ENCODE measurements at regions of chr12 and their contacts with region 1.

Region 1: DNA sequence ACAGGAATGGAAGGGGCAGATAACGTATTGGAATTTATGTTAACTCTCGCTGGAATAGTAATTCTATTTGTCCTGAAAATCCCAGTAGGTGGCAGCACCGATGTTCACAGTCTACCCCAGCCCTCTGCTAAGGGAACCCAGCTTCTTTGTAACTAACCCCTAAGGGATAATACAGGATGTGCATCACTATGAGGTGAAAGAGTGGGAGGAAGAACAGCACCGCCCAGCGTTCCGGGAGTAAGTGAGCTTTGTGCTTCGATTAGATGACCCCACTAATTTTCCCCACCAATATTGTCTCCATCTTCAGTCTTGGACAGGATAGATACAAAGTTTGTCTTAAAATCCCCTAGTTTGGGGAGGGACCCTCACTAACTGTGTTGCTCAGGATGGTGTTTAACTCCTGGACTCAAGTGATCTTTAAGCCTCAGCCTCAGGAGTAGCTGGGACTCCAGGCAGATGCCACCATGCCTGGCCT is 2.7 kb downstream of the SLC2A3 start:
- DNase-seq: peak; percentile 96
- ATAC-seq: peak; percentile 84
- H3K4me3 ChIP-seq: peak overlapping the region; percentile 97
- H3K27ac ChIP-seq: peak overlapping the region; percentile 68
- H3K4me1 ChIP-seq: peaks cover 5% of the 10 kb centered on the region
- H3K27me3 ChIP-seq: no peaks in the 10 kb centered on the region
- CTCF ChIP-seq: peak; percentile 77
- POLR2A ChIP-seq: peak; percentile 85
- RAD21 ChIP-seq: peak; percentile 83

Region 2: GRCh38 chr12:7269273-7269672 is 664.0 kb before region 1 on chr12:
- CTCF ChIA-PET with region 1: no interaction called
- POLR2A ChIA-PET with region 1: no interaction called
- dilution Hi-C with region 1: no loop called
- in situ Hi-C with region 1: no loop called
- intact Hi-C with region 1: no loop called
- DNase-seq: peak; percentile 1
- ATAC-seq: no peak
- H3K4me3 ChIP-seq: no peak overlapping the region
- H3K27ac ChIP-seq: no peak overlapping the region
- H3K4me1 ChIP-seq: no peaks in the 10 kb centered on the region
- H3K27me3 ChIP-seq: no peaks in the 10 kb centered on the region
- CTCF ChIP-seq: no peak
- POLR2A ChIP-seq: no peak
- RAD21 ChIP-seq: no peak

Region 3: GRCh38 chr12:7512553-7512952 is 420.7 kb before region 1 on chr12:
- CTCF ChIA-PET with region 1: no interaction called
- POLR2A ChIA-PET with region 1: no interaction called
- dilution Hi-C with region 1: no loop called
- in situ Hi-C with region 1: no loop called
- intact Hi-C with region 1: no loop called
- DNase-seq: peak; percentile 69
- ATAC-seq: no peak; the same call in 1 of the 2 replicates
- H3K4me3 ChIP-seq: no peak overlapping the region
- H3K27ac ChIP-seq: no peak overlapping the region
- H3K4me1 ChIP-seq: no peaks in the 10 kb centered on the region
- H3K27me3 ChIP-seq: no peaks in the 10 kb centered on the region
- CTCF ChIP-seq: no peak
- POLR2A ChIP-seq: no peak
- RAD21 ChIP-seq: no peak

Region 4: GRCh38 chr12:7899755-7900154 is 33.5 kb before region 1 on chr12:
- CTCF ChIA-PET with region 1: no interaction called
- POLR2A ChIA-PET with region 1: interaction called, 10 read pairs
- dilution Hi-C with region 1: no loop called
- in situ Hi-C with region 1: no loop called
- intact Hi-C with region 1: no loop called
- DNase-seq: peak; percentile 76
- ATAC-seq: peak; percentile 74
- H3K4me3 ChIP-seq: no peak overlapping the region
- H3K27ac ChIP-seq: no peak overlapping the region
- H3K4me1 ChIP-seq: no peaks in the 10 kb centered on the region
- H3K27me3 ChIP-seq: no peaks in the 10 kb centered on the region
- CTCF ChIP-seq: no peak
- POLR2A ChIP-seq: no peak
- RAD21 ChIP-seq: no peak

Region 5: GRCh38 chr12:7959701-7960121 is 26.4 kb after region 1 on chr12:
- CTCF ChIA-PET with region 1: interaction called, 12 read pairs
- POLR2A ChIA-PET with region 1: interaction called, 81 read pairs
- dilution Hi-C with region 1: no loop called
- in situ Hi-C with region 1: no loop called
- intact Hi-C with region 1: loop called (anchors 1 kb)
- DNase-seq: no peak
- ATAC-seq: no peak
- H3K4me3 ChIP-seq: no peak overlapping the region
- H3K27ac ChIP-seq: no peak overlapping the region; the same call in 1 of the 2 replicates
- H3K4me1 ChIP-seq: peaks cover 14% of the 10 kb centered on the region
- H3K27me3 ChIP-seq: no peaks in the 10 kb centered on the region
- CTCF ChIP-seq: no peak
- POLR2A ChIP-seq: no peak
- RAD21 ChIP-seq: no peak

Region 6: DNA sequence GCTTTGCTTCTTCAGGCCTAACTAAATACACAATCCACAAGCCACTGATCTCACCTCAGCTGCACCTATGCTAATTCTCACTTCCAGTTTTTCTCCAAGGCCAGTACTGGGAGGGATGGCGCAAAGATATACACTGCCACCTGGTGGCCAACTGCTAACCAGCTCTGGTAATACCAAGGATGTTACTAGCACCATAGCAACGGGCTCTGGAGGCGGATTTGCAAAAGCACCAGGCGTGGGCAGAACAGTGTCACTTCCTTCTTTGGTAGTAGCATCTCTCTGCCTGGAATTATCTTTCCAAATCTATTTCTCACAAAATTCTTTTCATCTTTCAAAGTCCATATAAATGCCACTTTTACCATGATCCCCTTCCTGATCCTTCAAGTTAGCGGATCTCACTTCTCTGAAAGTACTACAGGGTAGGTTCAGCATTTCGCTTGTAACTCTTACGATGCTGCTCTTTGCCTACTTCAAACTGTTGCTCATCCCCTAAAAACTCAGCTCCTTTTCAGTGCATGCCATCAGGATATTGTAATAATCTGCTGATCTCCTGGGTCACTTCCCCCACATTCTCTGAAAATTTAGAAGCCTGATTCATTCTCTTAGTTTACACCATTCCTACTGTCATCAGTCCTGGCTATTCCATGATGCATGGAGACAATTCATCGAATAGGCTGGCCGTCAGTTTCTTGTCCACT is 62.1 kb after region 1 on chr12:
- CTCF ChIA-PET with region 1: interaction called, 25 read pairs
- POLR2A ChIA-PET with region 1: interaction called, 7 read pairs
- dilution Hi-C with region 1: no loop called
- in situ Hi-C with region 1: no loop called
- intact Hi-C with region 1: loop called (anchors 1 kb)
- DNase-seq: peak; percentile 91
- ATAC-seq: peak; percentile 94
- H3K4me3 ChIP-seq: peak overlapping the region; percentile 15; the same call in 1 of the 2 replicates
- H3K27ac ChIP-seq: peak overlapping the region; percentile 62
- H3K4me1 ChIP-seq: peaks cover 8% of the 10 kb centered on the region
- H3K27me3 ChIP-seq: no peaks in the 10 kb centered on the region
- CTCF ChIP-seq: peak; percentile 82
- POLR2A ChIP-seq: no peak
- RAD21 ChIP-seq: peak; percentile 85

Region 7: GRCh38 chr12:8078398-8078797 is 145.1 kb after region 1 on chr12:
- CTCF ChIA-PET with region 1: interaction called, 3 read pairs
- POLR2A ChIA-PET with region 1: no interaction called
- dilution Hi-C with region 1: no loop called
- in situ Hi-C with region 1: no loop called
- intact Hi-C with region 1: loop called (anchors 1 kb)
- DNase-seq: peak; percentile 87
- ATAC-seq: peak; percentile 64
- H3K4me3 ChIP-seq: no peak overlapping the region
- H3K27ac ChIP-seq: no peak overlapping the region
- H3K4me1 ChIP-seq: peaks cover 4% of the 10 kb centered on the region
- H3K27me3 ChIP-seq: no peaks in the 10 kb centered on the region
- CTCF ChIP-seq: peak; percentile 77
- POLR2A ChIP-seq: no peak
- RAD21 ChIP-seq: peak; percentile 84

Region 8: DNA sequence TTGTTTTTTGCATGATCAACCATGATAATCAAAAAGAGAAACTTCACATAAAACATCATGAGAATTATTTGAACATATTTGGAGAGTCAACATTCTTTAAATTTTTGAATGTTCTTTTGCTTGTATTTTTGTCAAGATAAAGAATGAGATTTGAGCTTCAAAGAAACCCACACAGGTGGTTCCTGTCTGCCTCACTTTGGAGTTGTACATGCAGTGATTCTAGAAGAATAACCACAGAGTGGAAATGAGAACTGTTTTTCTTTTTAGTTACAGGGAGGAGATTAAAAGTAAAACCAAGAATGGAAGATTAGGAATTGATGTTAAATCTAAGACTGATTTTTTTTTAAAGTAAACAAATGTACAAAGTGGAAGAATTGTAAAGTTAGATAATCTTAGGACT is 221.2 kb after region 1 on chr12:
- CTCF ChIA-PET with region 1: no interaction called
- POLR2A ChIA-PET with region 1: no interaction called
- dilution Hi-C with region 1: no loop called
- in situ Hi-C with region 1: no loop called
- intact Hi-C with region 1: no loop called
- DNase-seq: peak; percentile 50
- ATAC-seq: no peak; the same call in 1 of the 2 replicates
- H3K4me3 ChIP-seq: no peak overlapping the region
- H3K27ac ChIP-seq: no peak overlapping the region
- H3K4me1 ChIP-seq: peaks cover 4% of the 10 kb centered on the region
- H3K27me3 ChIP-seq: no peaks in the 10 kb centered on the region
- CTCF ChIP-seq: no peak
- POLR2A ChIP-seq: no peak
- RAD21 ChIP-seq: no peak

Measured in IMR-90 (cell line).